ENCODE measurements at regions of chr1 and their contacts with region 1.

Region 1: DNA sequence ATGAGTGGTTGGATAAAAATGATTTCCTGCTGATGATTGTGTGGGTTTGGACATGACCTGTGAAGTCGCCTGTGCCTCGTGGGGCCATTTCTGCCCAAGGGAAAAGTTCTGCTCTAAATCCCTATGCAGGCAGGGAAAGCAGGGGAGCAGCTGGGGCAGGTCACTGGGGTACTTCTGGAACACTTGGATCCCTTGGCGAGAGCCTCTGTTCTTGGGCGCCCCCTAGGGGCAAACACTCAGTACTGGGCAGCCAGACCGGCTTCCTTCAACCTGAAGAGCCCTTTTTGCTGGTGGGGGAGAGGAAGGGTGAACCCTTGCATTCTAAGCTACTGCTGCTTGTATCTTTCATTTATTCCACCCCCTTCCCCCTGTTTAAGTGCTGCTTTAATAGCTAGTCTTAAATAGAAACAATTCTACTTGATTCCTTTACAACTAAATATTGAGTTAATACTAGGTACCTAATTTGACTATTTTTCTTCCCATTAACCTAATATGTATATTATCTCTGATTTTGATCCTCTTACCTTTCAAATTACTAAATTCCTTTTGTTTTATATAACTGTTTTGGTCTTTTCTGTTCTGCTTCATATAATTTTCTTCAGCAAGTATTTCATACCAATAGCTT is 5.1 kb upstream of the CLEC20A start:
- DNase-seq: no peak
- H3K4me3 ChIP-seq: no peak overlapping the region
- H3K27me3 ChIP-seq: 0 out of 2 replicates have a peak, but pooled peaks cover 1% of the 10 kb centered on the region
- CTCF ChIP-seq: peak; percentile 97

Region 2: GRCh38 chr1:178300352-178300699 is 201.5 kb before region 1 on chr1:
- CTCF ChIA-PET with region 1: interaction called, 57 read pairs
- POLR2A ChIA-PET with region 1: no interaction called
- DNase-seq: no peak
- H3K4me3 ChIP-seq: no peak overlapping the region
- H3K27me3 ChIP-seq: no peaks in the 10 kb centered on the region
- CTCF ChIP-seq: no peak

Region 3: DNA sequence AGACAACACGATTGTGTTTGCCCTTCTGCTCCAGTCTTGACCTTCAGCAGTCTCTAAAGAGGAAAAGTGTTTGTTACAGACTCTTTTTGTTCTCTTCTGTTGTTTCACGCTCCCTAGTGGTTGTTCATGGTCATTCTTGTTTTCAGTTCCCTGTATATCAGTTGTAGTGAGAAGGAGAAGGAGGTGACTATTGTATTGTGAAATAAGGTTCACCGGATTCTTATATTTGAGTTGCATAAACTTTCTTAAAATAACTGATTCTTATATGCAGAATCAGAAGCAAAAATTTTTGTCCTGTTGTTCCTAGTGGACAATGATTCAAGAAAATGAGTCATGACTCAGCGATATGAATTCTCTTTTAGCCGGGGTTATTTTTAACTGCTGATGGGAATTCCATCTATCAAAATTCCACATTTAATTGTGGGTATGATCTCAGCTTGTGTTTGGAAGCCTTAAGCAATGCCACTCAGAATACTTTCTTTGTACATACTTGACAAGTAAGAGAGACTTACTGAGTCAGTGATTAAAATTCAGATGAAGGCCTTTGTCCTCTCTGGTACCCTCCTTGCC is 157.2 kb before region 1 on chr1:
- CTCF ChIA-PET with region 1: interaction called, 16 read pairs
- POLR2A ChIA-PET with region 1: interaction called, 3 read pairs
- DNase-seq: peak; percentile 89
- H3K4me3 ChIP-seq: no peak overlapping the region
- H3K27me3 ChIP-seq: no peaks in the 10 kb centered on the region
- CTCF ChIP-seq: peak; percentile 61

Region 4: DNA sequence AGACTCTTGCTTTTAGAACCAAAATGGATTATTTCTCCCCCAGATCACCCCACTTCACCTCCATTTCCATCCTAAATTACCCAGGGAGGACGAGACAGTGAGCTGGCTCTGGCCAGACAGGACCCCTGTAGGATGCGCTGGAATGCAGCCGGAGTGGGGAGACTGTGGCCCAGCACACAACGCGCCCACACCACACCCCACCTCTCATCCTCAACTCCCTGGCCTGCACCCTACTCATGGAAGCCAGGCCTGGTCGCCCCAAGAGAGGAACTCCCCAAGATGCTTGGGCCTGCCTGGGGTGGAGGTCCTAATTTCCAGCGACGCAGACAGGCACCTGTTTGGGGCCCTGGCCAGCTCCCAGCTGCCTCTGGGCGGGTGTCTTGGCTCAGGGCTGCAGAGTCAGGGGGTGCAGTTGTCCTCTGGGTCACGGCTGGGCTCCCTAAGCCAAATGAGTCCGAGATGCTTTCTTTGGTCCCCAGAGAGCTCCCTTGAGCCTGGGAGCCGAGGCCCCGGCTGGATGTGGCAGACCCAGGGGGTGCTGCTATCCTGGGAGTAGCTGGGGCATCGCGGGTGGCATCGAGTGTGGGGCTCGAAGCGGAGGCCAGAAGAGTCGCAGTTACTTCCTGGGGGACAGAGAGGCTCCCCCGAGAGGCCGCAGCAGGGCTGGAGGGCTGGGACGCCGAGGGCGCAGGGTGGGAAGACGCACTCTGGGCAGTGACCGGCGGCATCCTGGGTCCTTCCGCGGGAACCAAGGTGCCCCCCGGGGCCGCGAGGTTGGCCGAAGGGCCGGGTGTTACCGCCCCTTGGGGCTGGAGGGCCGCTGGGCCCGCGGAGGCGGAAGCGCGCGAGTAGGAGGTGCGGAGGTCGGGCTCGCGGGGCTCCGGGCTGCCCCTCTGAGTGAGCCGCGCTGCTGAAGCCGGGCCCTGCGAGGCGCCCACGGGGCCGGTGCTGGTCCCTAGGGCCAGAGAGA is 15.4 kb before region 1 on chr1:
- CTCF ChIA-PET with region 1: interaction called, 28 read pairs
- POLR2A ChIA-PET with region 1: no interaction called
- DNase-seq: no peak
- H3K4me3 ChIP-seq: no peak overlapping the region
- H3K27me3 ChIP-seq: no peaks in the 10 kb centered on the region
- CTCF ChIP-seq: no peak

Region 5: DNA sequence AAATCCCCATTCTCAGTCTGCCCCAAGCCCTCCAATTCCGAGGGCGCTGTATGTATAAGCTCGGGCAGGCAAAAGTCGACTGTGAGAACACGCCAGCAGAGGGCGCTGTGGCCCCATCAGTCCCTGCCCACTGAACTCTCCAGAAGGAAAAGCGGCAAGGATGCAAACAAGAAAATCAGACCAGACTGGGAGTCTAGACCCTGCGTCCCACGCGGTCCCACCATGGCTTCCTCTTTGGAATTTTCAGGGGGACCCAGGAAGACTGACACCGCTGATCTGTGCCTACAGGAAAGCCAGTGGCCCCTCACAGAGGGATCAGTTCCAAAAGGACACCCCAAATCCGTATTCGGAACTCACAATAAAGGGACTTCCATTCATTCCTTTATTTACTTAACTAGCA is 30.6 kb after region 1 on chr1:
- CTCF ChIA-PET with region 1: interaction called, 63 read pairs
- POLR2A ChIA-PET with region 1: no interaction called
- DNase-seq: no peak
- H3K4me3 ChIP-seq: no peak overlapping the region
- H3K27me3 ChIP-seq: no peaks in the 10 kb centered on the region
- CTCF ChIP-seq: peak; percentile 90

Region 6: GRCh38 chr1:178684542-178685000 is 182.8 kb after region 1 on chr1:
- CTCF ChIA-PET with region 1: no interaction called
- POLR2A ChIA-PET with region 1: no interaction called
- DNase-seq: peak; percentile 92
- H3K4me3 ChIP-seq: no peak overlapping the region
- H3K27me3 ChIP-seq: no peaks in the 10 kb centered on the region
- CTCF ChIP-seq: no peak

Measured in BJ (cell line).